ENCODE measurements at regions of chr9 and their contacts with region 1.

Region 1: DNA sequence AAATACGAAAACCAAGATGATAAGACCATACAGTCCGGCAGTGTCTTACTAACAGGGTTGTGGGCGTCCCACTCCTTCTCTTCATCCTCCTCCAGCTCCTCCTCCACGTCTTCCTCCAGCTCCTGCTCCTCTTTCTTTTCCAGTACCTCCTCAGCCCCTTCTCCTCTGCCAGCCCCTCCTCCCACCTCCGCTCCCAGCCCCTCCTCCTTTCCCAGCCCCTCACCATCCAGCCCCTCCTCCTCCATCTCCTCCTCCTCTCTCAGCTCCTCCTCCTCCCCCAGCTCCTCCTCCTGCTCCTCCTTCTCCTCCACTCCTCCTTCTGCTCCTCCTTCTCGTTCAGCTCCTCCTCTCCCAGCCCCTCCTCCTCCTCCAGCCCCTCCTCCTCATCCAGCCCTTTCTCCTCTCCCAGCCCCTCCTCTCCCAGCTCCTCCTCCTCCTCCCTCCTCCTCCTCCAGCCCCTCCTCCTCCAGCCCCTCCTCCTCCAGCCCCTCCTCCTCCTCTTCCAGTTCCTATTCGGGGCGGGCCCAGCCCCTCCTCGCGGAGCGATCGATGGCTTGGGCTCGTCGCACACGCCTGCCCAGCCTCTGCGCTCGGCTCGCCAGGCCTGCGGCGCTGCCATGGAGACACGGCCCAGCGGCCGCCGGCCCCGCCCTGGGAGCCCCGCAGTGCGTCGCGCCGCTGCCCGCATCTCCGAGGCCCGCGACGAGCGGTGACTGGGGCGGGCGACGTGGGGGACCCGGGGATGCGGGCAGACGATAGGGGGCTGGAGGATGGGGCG is at the start of gene BRD3OS:
- DNase-seq: peak; percentile 100
- H3K4me3 ChIP-seq: peak within 1 kb of the TSS; percentile 73
- CTCF ChIP-seq: no peak

Region 2: GRCh38 chr9:133581513-133582343 is 443.3 kb before region 1 on chr9:
- in situ Hi-C with region 1: no loop called
- DNase-seq: no peak
- H3K4me3 ChIP-seq: no peak overlapping the region
- CTCF ChIP-seq: no peak

Region 3: GRCh38 chr9:133792721-133793470 is 232.1 kb before region 1 on chr9:
- in situ Hi-C with region 1: loop called (anchors 25 kb)
- DNase-seq: peak; percentile 64
- H3K4me3 ChIP-seq: no peak overlapping the region
- CTCF ChIP-seq: peak; percentile 98

Region 4: GRCh38 chr9:134088063-134088725 is 63.2 kb after region 1 on chr9:
- in situ Hi-C with region 1: no loop called
- DNase-seq: no peak
- H3K4me3 ChIP-seq: no peak overlapping the region
- CTCF ChIP-seq: no peak

Region 5: GRCh38 chr9:134283111-134283515 is 258.1 kb after region 1 on chr9:
- in situ Hi-C with region 1: no loop called
- DNase-seq: peak; percentile 56
- H3K4me3 ChIP-seq: no peak overlapping the region
- CTCF ChIP-seq: no peak